ENCODE measurements at regions of chr17 and their contacts with region 1.

Region 1: GRCh38 chr17:40362696-40363110 is 1.8 kb downstream of the GJD3 start:
- DNase-seq: peak; percentile 93
- CTCF ChIP-seq: peak; percentile 83

Region 2: DNA sequence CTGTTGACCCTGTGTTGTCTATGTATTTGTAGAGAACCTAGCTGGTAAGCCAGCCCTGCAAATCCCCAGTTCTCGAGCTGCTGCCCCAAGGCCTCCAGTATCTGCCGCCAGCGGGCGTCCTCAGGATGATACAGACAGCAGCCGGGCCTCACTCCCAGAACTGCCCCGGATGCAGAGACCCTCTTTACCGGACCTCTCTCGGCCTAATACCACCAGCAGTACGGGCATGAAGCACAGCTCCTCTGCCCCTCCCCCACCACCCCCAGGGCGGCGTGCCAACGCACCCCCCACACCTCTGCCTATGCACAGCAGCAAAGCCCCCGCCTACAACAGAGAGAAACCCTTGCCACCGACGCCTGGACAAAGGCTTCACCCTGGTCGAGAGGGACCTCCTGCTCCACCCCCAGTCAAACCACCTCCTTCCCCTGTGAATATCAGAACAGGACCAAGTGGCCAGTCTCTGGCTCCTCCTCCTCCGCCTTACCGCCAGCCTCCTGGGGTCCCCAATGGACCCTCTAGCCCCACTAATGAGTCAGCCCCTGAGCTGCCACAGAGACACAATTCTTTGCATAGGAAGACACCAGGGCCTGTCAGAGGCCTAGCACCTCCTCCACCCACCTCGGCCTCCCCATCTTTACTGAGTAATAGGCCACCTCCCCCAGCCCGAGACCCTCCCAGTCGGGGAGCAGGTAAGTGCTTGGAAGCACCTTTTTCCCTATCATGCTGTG is 98.1 kb before region 1 on chr17:
- in situ Hi-C with region 1: no loop called
- DNase-seq: no peak
- CTCF ChIP-seq: no peak

Region 3: GRCh38 chr17:40531051-40531991 is 168.6 kb after region 1 on chr17:
- in situ Hi-C with region 1: loop called (anchors 5 kb)
- DNase-seq: peak; percentile 61
- CTCF ChIP-seq: no peak

Measured in GM13976 (cell line).